HEK293 (cell line): ENCODE measurements at regions of chr15 and their contacts with region 1.

Region 1: GRCh38 chr15:62742409-62743171 is 300.0 kb upstream of the TPM1 start:
- H3K4me3 ChIP-seq: no peak overlapping the region
- H3K27ac ChIP-seq: no peak overlapping the region
- H3K4me1 ChIP-seq: no peaks in the 10 kb centered on the region
- CTCF ChIP-seq: peak; percentile 39

Region 2: GRCh38 chr15:62732078-62732477 is 10.5 kb before region 1 on chr15:
- CTCF ChIA-PET with region 1: interaction called, 14 read pairs
- POLR2A ChIA-PET with region 1: no interaction called
- H3K4me3 ChIP-seq: no peak overlapping the region
- H3K27ac ChIP-seq: no peak overlapping the region
- H3K4me1 ChIP-seq: 0 out of 2 replicates have a peak, but pooled peaks cover 4% of the 10 kb centered on the region
- CTCF ChIP-seq: no peak

Region 3: DNA sequence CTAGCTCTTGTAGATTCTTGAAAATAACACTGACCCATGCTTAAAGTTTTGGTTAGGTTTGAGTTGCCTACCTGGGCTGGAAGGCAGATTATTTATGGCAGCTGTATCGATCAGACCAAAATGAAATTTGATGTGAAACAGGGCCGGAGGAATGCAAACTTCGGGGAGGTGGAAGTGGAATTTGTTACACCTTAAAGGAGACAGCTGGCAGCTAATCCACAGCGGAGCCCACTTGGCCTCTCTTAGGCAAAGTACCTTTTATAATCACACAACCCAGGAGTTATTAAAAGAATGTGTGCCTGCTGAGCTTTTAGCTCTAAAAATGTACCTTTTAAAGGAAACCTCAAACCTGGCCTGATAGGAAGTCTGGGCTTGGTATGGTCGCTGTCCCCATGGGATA is 49.1 kb after region 1 on chr15:
- CTCF ChIA-PET with region 1: no interaction called
- POLR2A ChIA-PET with region 1: no interaction called
- H3K4me3 ChIP-seq: no peak overlapping the region
- H3K27ac ChIP-seq: no peak overlapping the region
- H3K4me1 ChIP-seq: no peaks in the 10 kb centered on the region
- CTCF ChIP-seq: no peak